ENCODE measurements at regions of chr7 and their contacts with region 1.

Region 1: DNA sequence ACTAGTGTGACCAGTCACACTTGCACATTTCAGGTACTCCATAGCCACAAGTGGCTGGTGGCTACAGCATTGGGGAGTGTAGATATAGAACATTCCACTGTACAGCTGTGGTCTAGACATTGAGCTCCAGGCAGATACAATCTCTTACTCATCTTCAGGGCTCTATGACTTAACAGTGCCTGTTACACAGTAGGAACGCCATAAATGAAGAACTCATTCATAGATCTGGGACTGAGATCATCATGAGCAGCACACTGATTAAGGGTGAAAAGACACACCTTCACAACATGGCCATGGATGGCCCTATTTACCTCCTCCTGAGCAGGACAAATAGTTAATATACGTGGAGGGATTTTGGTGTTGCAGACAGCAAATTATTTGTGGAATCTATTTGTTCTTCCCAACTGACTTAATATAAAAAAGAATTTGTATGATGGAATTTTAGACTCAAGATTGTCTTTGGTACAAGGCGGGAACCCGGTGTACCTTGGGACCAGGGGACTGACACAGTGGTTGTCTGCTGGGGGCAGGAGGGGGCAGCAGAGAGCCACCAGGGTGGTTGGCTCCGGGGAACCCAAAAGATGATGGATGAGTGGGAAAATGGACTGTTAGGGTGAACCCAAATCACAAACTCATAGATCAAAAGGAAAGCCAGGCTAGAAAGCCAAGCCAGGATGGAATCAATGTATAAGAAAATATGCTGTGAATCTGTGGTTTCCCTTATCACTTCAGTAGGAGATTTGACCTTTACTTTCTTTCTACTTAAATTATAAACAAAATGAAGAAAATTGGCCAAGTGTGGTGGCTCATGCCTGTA is 24.3 kb upstream of the CPA2 start:
- DNase-seq: peak; percentile 27
- H3K4me3 Mint-ChIP-seq: no peak overlapping the region
- H3K27ac Mint-ChIP-seq: no peak overlapping the region
- H3K4me1 Mint-ChIP-seq: peaks cover 17% of the 10 kb centered on the region
- H3K27me3 Mint-ChIP-seq: peaks cover 9% of the 10 kb centered on the region

Region 2: DNA sequence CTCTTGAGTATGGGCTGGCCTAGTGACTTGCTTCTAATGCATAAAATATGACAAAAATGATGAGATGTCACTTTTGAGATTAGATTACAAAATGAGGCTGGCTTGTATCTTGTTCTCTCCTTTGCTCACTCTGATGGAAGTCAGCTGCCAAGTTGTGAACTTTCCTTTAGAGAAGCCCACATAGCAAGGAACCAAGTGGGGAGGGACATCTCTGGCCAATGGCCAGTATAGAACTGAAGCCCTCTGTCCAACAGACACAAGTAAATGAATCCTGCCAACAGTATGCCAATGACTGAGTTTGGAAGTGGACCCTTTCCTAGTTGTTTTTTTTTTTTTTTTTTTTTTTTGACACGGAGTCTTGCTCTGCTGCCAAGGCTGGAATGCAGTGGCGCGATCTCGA is 194.6 kb before region 1 on chr7:
- intact Hi-C with region 1: no loop called
- DNase-seq: no peak
- H3K4me3 Mint-ChIP-seq: no peak overlapping the region
- H3K27ac Mint-ChIP-seq: no peak overlapping the region
- H3K4me1 Mint-ChIP-seq: peaks cover 7% of the 10 kb centered on the region
- H3K27me3 Mint-ChIP-seq: no peaks in the 10 kb centered on the region

Region 3: DNA sequence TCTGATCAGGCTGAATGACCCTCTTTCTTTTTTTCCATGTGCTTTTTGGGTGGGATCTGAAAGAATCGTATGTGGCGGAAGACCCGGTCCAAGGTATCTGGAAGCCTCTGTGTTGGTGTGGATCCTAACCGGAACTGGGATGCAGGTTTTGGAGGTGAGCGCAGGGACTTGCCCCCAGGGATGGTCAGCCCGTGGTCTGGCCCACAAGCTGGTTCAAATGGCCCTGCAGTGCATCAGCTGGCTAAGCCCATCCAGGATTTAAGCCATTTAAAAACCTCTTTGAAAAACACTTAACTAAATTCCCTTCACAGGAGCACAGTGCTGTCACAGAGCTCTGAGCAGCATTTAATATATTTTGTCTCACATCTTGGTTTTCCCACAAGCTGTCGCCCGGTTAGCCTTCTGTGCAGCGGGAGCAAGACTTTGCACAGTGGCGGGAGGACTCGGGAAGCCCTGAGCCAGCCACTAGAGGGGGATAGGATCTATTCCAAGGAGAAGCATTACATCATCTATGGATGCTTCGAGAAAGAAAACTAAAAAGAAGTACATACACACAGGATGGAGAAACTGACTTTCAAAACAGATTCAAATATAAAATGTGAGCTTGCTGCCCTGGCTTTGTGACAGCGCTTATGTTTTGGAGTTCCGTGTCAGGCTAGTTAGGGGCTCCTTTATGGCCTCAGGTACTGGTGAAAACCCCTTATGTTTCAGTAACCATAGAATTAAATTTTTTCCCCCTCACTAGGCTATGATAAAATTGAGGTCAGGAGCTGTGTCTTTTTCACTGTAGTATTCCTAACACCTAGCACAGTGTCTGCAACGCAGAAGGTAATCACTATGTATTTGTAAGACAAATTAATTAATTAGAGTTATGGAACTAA is 35.6 kb after region 1 on chr7:
- intact Hi-C with region 1: loop called (anchors 5 kb)
- DNase-seq: no peak
- H3K4me3 Mint-ChIP-seq: no peak overlapping the region
- H3K27ac Mint-ChIP-seq: peak overlapping the region; percentile 63
- H3K4me1 Mint-ChIP-seq: peaks cover 21% of the 10 kb centered on the region
- H3K27me3 Mint-ChIP-seq: peaks cover 3% of the 10 kb centered on the region

Region 4: DNA sequence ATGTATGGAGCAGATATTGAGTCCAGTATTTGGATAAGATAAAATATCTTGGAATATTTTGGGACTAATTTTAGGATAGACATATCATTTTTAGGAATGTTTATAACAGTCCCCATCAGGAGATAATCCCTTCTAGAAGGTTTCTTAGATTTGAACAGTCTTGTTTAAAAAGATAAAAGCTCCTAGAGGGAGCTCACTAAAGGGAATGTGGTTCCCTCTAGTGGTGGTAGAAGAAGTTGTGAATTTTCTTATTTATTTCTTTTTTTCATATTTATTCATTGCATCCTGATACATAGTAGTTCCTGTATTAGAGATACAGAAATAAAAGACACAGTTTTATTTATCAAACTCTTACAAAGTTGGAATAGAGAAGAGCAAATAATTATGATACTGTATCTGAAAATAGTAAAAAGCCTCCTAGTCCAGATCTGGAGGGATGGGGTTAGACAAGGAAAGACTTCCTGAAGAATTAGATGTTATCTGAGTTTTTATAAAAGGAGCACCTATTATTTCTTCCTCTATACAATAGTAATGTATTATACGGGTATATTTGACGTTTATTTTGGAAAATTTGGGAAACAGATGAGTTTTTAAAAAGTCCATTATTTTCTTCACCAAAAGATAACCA is 516.1 kb after region 1 on chr7:
- intact Hi-C with region 1: loop called (anchors 5 kb)
- DNase-seq: no peak
- H3K4me3 Mint-ChIP-seq: no peak overlapping the region
- H3K27ac Mint-ChIP-seq: no peak overlapping the region
- H3K4me1 Mint-ChIP-seq: no peaks in the 10 kb centered on the region
- H3K27me3 Mint-ChIP-seq: peaks cover 10% of the 10 kb centered on the region

Measured in activated T-helper 2 cell treated with anti-CD3 and anti-CD28 coated beads, Interferon-gamma antibody, Interleukin-2, Interleukin-4, amounts not matched to agents 10 μg/mL and 5 μg/mL and 100 μg/mL, durations not matched to agents 14 hours and 24 hours and 36 hours (primary cell).